ENCODE measurements at regions of chr20 and their contacts with region 1.

Region 1: GRCh38 chr20:49132995-49133478 is 55.1 kb downstream of the STAU1 start:
- DNase-seq: peak in 1 of 2 donors; percentile 88
- H3K4me3 ChIP-seq: no peak overlapping the region
- H3K27ac ChIP-seq: peak overlapping the region in 3 of 5 donors; percentile 14 to 46 (median 17)
- H3K4me1 ChIP-seq: peaks cover 5 to 10% (median 7%) of the 10 kb centered on the region in 4 donors
- H3K27me3 ChIP-seq: no peaks in the 10 kb centered on the region
- CTCF ChIP-seq: peak in 5 of 7 experiments; percentile 29 to 77 (median 52)
- EP300 ChIP-seq: no peak
- POLR2A ChIP-seq: no peak

Region 2: DNA sequence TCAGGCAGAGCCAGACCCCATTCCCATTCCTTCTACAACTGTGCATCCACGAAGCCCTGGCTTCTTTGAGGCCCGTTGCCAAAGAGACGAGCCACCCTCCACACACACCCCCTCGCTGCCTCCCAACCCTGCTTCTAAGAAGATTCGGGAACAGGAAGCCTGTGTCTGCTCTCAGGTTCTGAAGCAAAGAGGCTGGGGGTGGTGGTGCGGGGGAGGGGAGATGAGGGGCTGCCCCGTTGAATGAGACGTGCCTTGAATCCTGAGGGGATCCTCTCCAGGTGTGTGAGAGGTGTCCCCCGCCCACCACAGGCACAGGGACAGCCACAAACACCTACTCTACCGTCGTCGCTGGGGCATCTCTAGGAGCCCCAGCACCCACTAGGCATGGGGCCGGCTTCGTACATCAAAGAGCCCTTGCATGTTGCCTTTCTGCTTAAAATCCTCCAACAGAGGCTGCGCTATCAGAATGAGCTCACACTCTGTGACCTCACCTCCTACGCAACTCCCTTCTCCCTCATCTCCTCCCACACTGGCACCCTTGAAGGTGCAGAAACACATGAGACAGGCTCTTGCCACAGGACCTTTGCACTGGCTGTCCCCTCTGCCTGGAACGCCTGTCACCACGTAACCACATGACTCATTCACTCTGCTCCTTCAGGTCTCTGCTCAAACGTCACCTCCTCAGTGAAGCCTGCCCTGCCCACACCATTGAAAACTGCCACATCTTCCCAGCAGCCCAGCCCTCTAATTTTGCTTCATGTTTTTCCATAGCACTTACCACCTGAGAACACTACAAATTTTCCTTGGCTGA is 363.8 kb before region 1 on chr20:
- intact Hi-C with region 1: no loop called
- DNase-seq: peak; percentile 33 to 68
- H3K4me3 ChIP-seq: no peak overlapping the region
- H3K27ac ChIP-seq: peak overlapping the region in 3 of 5 donors; percentile 38 to 70 (median 67)
- H3K4me1 ChIP-seq: peaks cover 3 to 55% (median 4%) of the 10 kb centered on the region in 4 donors
- H3K27me3 ChIP-seq: no peaks in the 10 kb centered on the region
- CTCF ChIP-seq: no peak
- EP300 ChIP-seq: no peak
- POLR2A ChIP-seq: no peak

Region 3: GRCh38 chr20:49219089-49219923 is 86.3 kb after region 1 on chr20 and contains the start of gene DDX27:
- intact Hi-C with region 1: loop called (anchors 5 kb)
- DNase-seq: peak; percentile 99 to 100
- H3K4me3 ChIP-seq: peak within 1 kb of the TSS; percentile 72 to 86 (median 78)
- H3K27ac ChIP-seq: peak within 1 kb of the TSS; percentile 79 to 96 (median 91)
- H3K4me1 ChIP-seq: peaks cover 9 to 33% (median 26%) of the 10 kb centered on the region in 4 donors
- H3K27me3 ChIP-seq: no peaks in the 10 kb centered on the region
- CTCF ChIP-seq: peak in 1 of 7 experiments; percentile 18
- EP300 ChIP-seq: no peak
- POLR2A ChIP-seq: peak in 2 of 4 donors; percentile 25 to 81
- total RNA-seq, gene DDX27: 11.7 to 38.2 (median 36.2) TPM

Region 4: DNA sequence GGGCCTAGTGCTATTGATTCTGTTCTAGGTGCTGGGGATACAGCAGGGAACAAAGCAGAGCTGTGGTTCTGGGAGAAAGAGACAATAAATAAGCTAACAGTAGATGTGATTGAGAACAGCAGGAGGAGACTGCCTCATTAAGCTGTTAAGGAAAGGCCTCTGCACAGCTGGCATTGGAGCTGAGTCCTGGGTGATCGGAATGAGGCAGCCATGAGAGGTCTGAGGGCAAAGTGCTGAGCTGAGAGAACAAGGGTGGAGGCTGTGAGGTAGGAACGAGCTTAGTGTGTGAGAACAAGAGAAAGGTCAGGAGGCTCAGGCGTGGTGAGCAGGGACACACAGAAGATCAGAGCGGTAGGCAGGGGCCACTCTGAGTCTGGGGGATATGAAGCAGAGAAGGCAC is 104.5 kb after region 1 on chr20:
- intact Hi-C with region 1: no loop called
- DNase-seq: no peak
- H3K4me3 ChIP-seq: no peak overlapping the region
- H3K27ac ChIP-seq: no peak overlapping the region
- H3K4me1 ChIP-seq: no peaks in the 10 kb centered on the region
- H3K27me3 ChIP-seq: no peaks in the 10 kb centered on the region
- CTCF ChIP-seq: no peak
- EP300 ChIP-seq: no peak
- POLR2A ChIP-seq: no peak

Measured in stomach (tissue), 19 donors.